Transverse colon (tissue), 4 donors: ENCODE measurements at regions of chr22 and their contacts with region 1.

Region 1: DNA sequence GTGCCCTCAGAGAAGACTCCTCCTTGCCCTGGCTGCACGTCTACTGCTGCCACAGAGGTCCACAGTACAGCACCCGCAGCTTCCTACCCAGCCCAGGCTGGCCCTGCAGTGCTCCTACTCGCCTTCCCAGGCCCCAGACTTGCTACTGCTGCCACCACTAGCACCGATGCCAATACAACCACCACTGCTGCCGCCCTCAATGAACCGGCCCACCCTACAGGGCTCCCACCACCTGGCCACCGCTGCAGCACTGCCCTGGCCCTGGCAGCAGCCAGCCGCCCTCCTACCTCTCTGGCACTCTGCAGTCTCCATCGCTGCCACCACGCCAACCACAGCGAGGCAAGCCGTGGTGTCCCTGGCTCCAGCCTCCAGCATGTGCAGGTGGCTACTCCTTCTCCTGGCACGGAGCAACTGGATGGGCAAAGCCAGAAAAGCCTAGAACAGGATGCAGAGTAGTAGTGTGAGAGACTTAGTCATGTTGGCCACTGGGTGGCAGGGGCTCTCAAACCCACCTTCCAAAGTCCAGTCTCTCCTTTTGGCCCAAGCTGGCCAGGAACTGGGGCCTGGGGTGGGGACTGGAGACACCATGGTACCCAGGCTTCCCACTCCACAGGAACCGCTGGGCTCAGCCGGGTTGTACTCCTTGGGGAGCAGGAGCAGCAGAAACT is 39.4 kb downstream of the C22orf42 start:
- DNase-seq: no peak
- H3K4me3 ChIP-seq: no peak overlapping the region
- H3K27ac ChIP-seq: no peak overlapping the region
- H3K4me1 ChIP-seq: no peaks in the 10 kb centered on the region
- H3K27me3 ChIP-seq: no peaks in the 10 kb centered on the region
- CTCF ChIP-seq: no peak
- EP300 ChIP-seq: no peak
- POLR2A ChIP-seq: no peak

Region 2: DNA sequence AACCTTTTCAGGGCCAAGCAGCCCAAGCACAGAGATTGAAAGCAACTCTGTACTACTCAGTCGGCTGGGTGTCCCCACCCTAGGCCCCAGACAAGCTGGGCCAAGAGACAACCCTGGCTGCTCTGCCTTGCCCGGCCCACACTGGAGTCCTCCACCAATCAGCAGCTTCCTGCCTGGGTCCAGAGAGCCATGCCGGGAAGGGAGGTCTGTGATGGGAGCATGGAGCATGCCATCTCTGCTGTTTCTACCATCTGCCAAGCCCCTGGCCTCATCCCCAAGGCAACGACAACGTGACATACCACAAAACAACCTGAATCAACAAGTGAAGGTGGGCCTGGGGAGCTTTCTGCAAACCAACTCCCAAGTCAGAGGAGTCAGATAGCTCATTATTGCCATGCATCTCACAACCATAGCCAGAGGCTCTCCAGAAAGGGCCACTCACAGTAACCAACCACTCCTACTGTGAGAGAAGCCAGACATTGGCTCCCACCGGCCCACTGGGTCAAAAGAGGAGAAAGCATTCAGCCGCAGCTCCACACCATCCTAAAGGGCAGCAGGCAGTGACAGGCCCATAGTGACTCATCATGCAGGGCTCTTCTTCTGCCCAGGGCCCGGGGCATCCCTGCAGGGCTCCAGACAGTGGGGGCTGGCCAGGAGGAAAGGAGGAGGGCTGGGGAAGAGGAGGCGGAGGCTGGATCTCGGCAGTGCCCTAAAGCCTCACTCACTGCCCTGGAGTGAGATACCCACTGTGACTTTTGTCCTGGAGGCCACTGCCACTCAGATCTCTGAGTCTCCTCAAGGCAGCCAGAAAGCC is 791.6 kb before region 1 on chr22:
- in situ Hi-C with region 1: no loop called
- intact Hi-C with region 1: loop called (anchors 10 kb)
- DNase-seq: no peak
- H3K4me3 ChIP-seq: no peak overlapping the region
- H3K27ac ChIP-seq: no peak overlapping the region
- H3K4me1 ChIP-seq: no peaks in the 10 kb centered on the region
- H3K27me3 ChIP-seq: no peaks in the 10 kb centered on the region
- CTCF ChIP-seq: no peak
- EP300 ChIP-seq: no peak
- POLR2A ChIP-seq: no peak